CD4-positive, alpha-beta T cell (primary cell): ENCODE measurements at regions of chr21 and their contacts with region 1.

Region 1: DNA sequence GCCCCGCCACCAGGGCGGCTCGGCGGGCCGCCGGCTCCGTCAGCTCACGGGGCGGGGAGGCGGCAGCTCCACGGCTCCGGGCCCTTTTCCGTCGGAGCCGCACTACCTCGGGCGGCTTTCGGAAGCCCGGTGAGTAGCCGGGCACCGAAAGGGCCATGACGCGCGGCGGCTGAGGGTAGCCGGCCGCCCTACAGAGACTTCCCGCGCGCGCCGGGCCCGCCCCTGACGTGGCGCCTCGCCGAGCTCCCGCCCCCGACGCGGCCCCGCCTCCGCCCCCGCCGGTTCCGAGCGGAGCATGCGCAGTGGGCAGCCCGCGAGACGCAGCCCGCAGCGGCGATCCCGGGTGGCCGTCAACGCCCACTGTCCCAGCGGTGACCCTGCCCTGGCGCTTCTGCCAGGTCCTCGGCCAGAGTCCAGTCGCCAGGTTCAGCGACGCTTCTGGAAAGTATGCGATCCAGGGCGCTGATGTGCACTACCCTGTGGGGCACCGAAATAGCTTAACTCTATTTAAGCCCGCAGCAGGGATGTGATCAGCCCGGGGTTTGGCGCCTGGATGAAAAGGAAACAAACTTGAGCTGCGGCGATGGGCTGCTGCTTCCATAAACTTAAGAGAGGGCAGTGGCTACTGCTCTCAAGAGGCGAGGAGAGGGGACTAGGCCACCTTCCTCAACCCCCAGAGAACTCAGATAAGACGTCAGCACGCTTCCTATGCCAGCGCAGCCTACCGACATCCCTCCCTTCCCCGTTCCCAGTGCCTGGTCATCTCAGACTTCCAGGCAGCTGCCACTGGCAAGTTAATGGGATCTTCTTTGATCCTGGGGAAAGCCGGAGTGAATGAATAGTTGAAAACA is at the start of gene DONSON:
- DNase-seq: peak; percentile 72 to 95 (median 84)
- ATAC-seq: peak; percentile 90
- H3K4me3 ChIP-seq: peak within 1 kb of the TSS; percentile 75
- H3K4me3 Mint-ChIP-seq: peak within 1 kb of the TSS; percentile 97
- H3K27ac ChIP-seq: peak within 1 kb of the TSS; percentile 4 to 42
- H3K27ac Mint-ChIP-seq: peak within 1 kb of the TSS; percentile 81
- H3K4me1 ChIP-seq: peaks cover 11% of the 10 kb centered on the region
- H3K4me1 Mint-ChIP-seq: peaks cover 10% of the 10 kb centered on the region
- H3K27me3 ChIP-seq: no peaks in the 10 kb centered on the region
- H3K27me3 Mint-ChIP-seq: no peaks in the 10 kb centered on the region
- CTCF ChIP-seq: no peak
- total RNA-seq, gene DONSON: 11.9 to 13.5 TPM

Region 2: GRCh38 chr21:32966120-32966519 is 622.6 kb before region 1 on chr21:
- CTCF ChIA-PET with region 1: no interaction called
- POLR2A ChIA-PET with region 1: no interaction called
- intact Hi-C with region 1: no loop called
- DNase-seq: peak in 1 of 14 experiments; percentile 38
- ATAC-seq: no peak
- H3K4me3 ChIP-seq: no peak overlapping the region
- H3K4me3 Mint-ChIP-seq: no peak overlapping the region
- H3K27ac ChIP-seq: no peak overlapping the region
- H3K27ac Mint-ChIP-seq: no peak overlapping the region
- H3K4me1 ChIP-seq: no peaks in the 10 kb centered on the region
- H3K4me1 Mint-ChIP-seq: no peaks in the 10 kb centered on the region
- H3K27me3 ChIP-seq: peaks cover 0 to 5% of the 10 kb centered on the region in 2 experiments
- H3K27me3 Mint-ChIP-seq: peaks cover 31% of the 10 kb centered on the region
- CTCF ChIP-seq: no peak

Region 3: GRCh38 chr21:33403779-33404585 is 184.7 kb before region 1 on chr21:
- CTCF ChIA-PET with region 1: no interaction called
- POLR2A ChIA-PET with region 1: no interaction called
- intact Hi-C with region 1: no loop called
- DNase-seq: peak in 10 of 14 experiments; percentile 8 to 45 (median 32)
- ATAC-seq: peak; percentile 33
- H3K4me3 ChIP-seq: peak overlapping the region; percentile 82
- H3K4me3 Mint-ChIP-seq: peak overlapping the region; percentile 96
- H3K27ac ChIP-seq: peak overlapping the region in 1 of 2 donors; percentile 65
- H3K27ac Mint-ChIP-seq: peak overlapping the region; percentile 84
- H3K4me1 ChIP-seq: peaks cover 38% of the 10 kb centered on the region
- H3K4me1 Mint-ChIP-seq: peaks cover 47% of the 10 kb centered on the region
- H3K27me3 ChIP-seq: no peaks in the 10 kb centered on the region
- H3K27me3 Mint-ChIP-seq: no peaks in the 10 kb centered on the region
- CTCF ChIP-seq: no peak

Region 4: GRCh38 chr21:33491373-33492102 is 97.2 kb before region 1 on chr21 and contains the start of gene DNAJC28:
- CTCF ChIA-PET with region 1: no interaction called
- POLR2A ChIA-PET with region 1: interaction called, 5 read pairs
- intact Hi-C with region 1: loop called in 1 of 2 experiments (anchors 5 kb)
- DNase-seq: peak; percentile 89 to 96 (median 92)
- ATAC-seq: peak; percentile 96
- H3K4me3 ChIP-seq: peak within 1 kb of the TSS; percentile 73
- H3K4me3 Mint-ChIP-seq: peak within 1 kb of the TSS; percentile 94
- H3K27ac ChIP-seq: peak within 1 kb of the TSS; percentile 39 to 63
- H3K27ac Mint-ChIP-seq: peak within 1 kb of the TSS; percentile 85
- H3K4me1 ChIP-seq: peaks cover 14% of the 10 kb centered on the region
- H3K4me1 Mint-ChIP-seq: peaks cover 13% of the 10 kb centered on the region
- H3K27me3 ChIP-seq: no peaks in the 10 kb centered on the region
- H3K27me3 Mint-ChIP-seq: no peaks in the 10 kb centered on the region
- CTCF ChIP-seq: no peak
- total RNA-seq, gene DNAJC28: not detected

Region 5: GRCh38 chr21:33522953-33523349 is 65.8 kb before region 1 on chr21:
- CTCF ChIA-PET with region 1: no interaction called
- POLR2A ChIA-PET with region 1: no interaction called
- intact Hi-C with region 1: no loop called
- DNase-seq: no peak
- ATAC-seq: no peak
- H3K4me3 ChIP-seq: no peak overlapping the region
- H3K4me3 Mint-ChIP-seq: no peak overlapping the region
- H3K27ac ChIP-seq: no peak overlapping the region
- H3K27ac Mint-ChIP-seq: no peak overlapping the region
- H3K4me1 ChIP-seq: no peaks in the 10 kb centered on the region
- H3K4me1 Mint-ChIP-seq: no peaks in the 10 kb centered on the region
- H3K27me3 ChIP-seq: no peaks in the 10 kb centered on the region
- H3K27me3 Mint-ChIP-seq: no peaks in the 10 kb centered on the region
- CTCF ChIP-seq: no peak

Region 6: GRCh38 chr21:33572350-33572749 is 16.4 kb before region 1 on chr21:
- CTCF ChIA-PET with region 1: interaction called, 6 read pairs
- POLR2A ChIA-PET with region 1: interaction called, 15 read pairs
- intact Hi-C with region 1: no loop called
- DNase-seq: no peak
- ATAC-seq: no peak
- H3K4me3 ChIP-seq: no peak overlapping the region
- H3K4me3 Mint-ChIP-seq: no peak overlapping the region
- H3K27ac ChIP-seq: no peak overlapping the region
- H3K27ac Mint-ChIP-seq: peak overlapping the region; percentile 48
- H3K4me1 ChIP-seq: no peaks in the 10 kb centered on the region
- H3K4me1 Mint-ChIP-seq: peaks cover 28% of the 10 kb centered on the region
- H3K27me3 ChIP-seq: no peaks in the 10 kb centered on the region
- H3K27me3 Mint-ChIP-seq: no peaks in the 10 kb centered on the region
- CTCF ChIP-seq: no peak

Region 7: GRCh38 chr21:33634254-33634653 is 45.5 kb after region 1 on chr21:
- CTCF ChIA-PET with region 1: no interaction called
- POLR2A ChIA-PET with region 1: no interaction called
- intact Hi-C with region 1: loop called in 1 of 2 experiments (anchors 5 kb)
- DNase-seq: no peak
- ATAC-seq: no peak
- H3K4me3 ChIP-seq: no peak overlapping the region
- H3K4me3 Mint-ChIP-seq: no peak overlapping the region
- H3K27ac ChIP-seq: no peak overlapping the region
- H3K27ac Mint-ChIP-seq: no peak overlapping the region
- H3K4me1 ChIP-seq: no peaks in the 10 kb centered on the region
- H3K4me1 Mint-ChIP-seq: peaks cover 20% of the 10 kb centered on the region
- H3K27me3 ChIP-seq: no peaks in the 10 kb centered on the region
- H3K27me3 Mint-ChIP-seq: no peaks in the 10 kb centered on the region
- CTCF ChIP-seq: no peak